Tibial artery (tissue), 4 donors: ENCODE measurements at regions of chr1 and their contacts with region 1.

Region 1: GRCh38 chr1:212070720-212071302 is 35.3 kb downstream of the DTL start:
- DNase-seq: no peak
- H3K4me3 ChIP-seq: no peak overlapping the region
- H3K27ac ChIP-seq: peak overlapping the region in 1 of 2 donors; percentile 27
- H3K4me1 ChIP-seq: peaks cover 0 to 11% (median 2%) of the 10 kb centered on the region in 4 donors
- H3K27me3 ChIP-seq: no peaks in the 10 kb centered on the region
- CTCF ChIP-seq: peak; percentile 75 to 84

Region 2: DNA sequence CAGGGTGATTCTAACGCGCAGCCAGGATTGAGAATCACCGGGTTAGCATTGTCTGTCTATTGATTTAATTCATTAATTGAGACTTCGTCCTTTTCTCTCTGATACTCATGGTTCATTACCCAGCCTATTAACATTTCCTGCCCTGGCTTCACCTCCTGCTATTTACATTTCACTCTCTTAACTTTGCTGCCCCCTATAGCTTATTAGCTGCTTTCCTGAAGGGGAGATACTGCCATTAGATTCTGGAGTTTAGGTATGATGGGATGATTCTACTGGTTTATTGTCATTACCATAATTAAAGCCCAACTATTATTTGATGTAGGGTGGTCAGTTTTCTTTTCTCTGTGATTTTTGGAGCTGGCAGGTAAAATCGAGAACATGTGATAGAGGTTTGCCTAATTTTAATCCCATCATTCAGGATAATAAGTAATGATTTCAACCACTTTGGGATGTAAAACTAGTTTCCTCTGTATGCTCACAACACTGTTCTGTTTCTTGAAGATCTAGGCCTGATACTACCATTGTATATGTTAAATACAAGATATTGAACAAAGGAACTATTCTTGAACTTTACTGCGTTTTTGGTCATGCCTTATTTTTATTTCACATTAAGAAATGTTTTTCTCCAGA is 220.8 kb after region 1 on chr1:
- intact Hi-C with region 1: loop called (anchors 5 kb)
- DNase-seq: no peak
- H3K4me3 ChIP-seq: no peak overlapping the region
- H3K27ac ChIP-seq: peak overlapping the region in 1 of 2 donors; percentile 29
- H3K4me1 ChIP-seq: peaks cover 0 to 71% (median 45%) of the 10 kb centered on the region in 4 donors
- H3K27me3 ChIP-seq: no peaks in the 10 kb centered on the region
- CTCF ChIP-seq: peak; percentile 27 to 43

Region 3: DNA sequence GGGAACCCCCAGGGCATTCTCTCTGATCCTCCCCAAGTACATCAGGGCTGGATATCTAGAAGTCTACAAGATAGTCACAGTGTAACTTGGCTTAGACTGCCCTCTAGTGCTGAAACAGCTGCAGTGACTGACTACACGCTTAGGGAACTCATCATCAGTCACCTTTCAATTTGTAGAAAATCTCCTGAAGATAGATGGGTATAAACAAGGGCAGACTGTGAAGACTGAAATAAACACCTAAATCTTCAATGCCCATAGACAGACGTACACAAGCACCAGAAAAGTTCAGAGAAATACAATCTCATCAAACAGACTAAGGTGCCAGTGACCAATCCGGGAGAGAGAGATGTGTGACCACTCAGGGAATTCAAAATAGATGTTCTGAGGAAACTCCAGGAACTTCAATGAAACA is 297.3 kb after region 1 on chr1:
- intact Hi-C with region 1: loop called (anchors 2 kb)
- DNase-seq: peak in 1 of 2 donors; percentile 44
- H3K4me3 ChIP-seq: no peak overlapping the region
- H3K27ac ChIP-seq: peak overlapping the region in 1 of 2 donors; percentile 42
- H3K4me1 ChIP-seq: peaks cover 0 to 14% (median 0%) of the 10 kb centered on the region in 4 donors
- H3K27me3 ChIP-seq: no peaks in the 10 kb centered on the region
- CTCF ChIP-seq: peak; percentile 82 to 89